Mammary epithelial cell (primary cell): ENCODE measurements at regions of chr11 and their contacts with region 1.

Region 1: DNA sequence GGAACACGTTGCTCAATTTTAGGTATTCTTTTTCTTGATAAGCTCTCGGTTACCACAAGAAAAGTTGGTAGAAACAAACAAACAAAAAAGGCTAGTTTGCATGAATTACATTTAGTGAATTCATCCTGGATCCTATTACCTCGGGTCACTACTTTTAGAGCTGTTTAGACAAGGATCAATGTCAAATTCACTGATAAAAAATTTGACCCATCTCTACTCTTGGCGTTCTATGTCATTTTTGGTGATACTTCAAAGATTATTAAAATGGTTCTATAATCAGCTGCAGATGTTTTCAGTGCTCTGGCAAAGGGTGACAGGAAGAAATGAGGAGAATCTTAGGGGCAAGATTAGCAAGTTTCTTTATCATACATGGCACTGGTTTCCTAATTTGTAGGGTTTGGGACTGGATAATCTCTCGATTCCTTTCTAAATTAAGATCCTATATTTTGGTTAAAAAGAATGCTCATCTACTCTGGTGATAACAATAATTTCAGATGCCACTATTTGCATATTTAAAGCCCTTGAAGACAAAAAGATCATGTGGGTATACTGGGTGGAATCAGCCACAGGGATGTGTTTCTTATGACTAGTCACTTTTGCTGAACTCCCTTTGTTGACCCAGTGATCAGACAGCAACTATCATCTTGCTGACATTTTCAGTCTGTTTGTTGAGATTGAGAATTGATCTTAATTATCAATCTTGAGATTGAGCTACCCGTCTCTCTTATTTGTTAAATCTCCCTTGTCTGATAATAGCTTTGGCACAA is 442.9 kb downstream of the AASDHPPT start:
- DNase-seq: peak; percentile 2
- H3K4me3 ChIP-seq: no peak overlapping the region
- H3K27ac ChIP-seq: no peak overlapping the region
- H3K4me1 ChIP-seq: no peaks in the 10 kb centered on the region
- H3K27me3 ChIP-seq: peaks cover 3% of the 10 kb centered on the region
- CTCF ChIP-seq: no peak

Region 2: DNA sequence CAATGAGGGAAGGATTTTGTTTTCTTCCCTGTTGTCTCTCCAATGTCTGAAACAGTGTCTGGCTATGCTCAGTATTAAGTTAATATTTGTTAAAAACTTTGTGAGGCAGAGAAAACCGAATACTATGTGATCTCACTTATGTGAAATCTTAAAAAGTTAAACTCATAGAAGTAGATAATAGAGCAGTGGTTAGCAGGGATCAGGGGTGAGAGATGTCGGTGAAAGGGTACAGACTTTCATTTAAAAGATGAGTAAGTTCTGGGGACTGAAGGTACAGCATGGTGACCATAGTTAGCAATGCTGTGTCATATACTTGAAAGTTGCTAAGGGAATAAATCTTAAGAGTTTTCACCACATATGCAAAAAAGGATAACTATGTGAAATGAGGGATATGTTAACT is 198.2 kb before region 1 on chr11:
- CTCF ChIA-PET with region 1: interaction called, 12 read pairs
- dilution Hi-C with region 1: no loop called
- in situ Hi-C with region 1: no loop called
- intact Hi-C with region 1: no loop called
- DNase-seq: no peak
- H3K4me3 ChIP-seq: no peak overlapping the region
- H3K27ac ChIP-seq: no peak overlapping the region
- H3K4me1 ChIP-seq: no peaks in the 10 kb centered on the region
- H3K27me3 ChIP-seq: no peaks in the 10 kb centered on the region
- CTCF ChIP-seq: no peak